Activated CD4-positive, alpha-beta memory T cell treated with anti-CD3 and anti-CD28 coated beads for 36 hours (primary cell): ENCODE measurements at regions of chr2 and their contacts with region 1.

Region 1: GRCh38 chr2:30139131-30139870 is 7.5 kb upstream of the YPEL5 start:
- DNase-seq: peak; percentile 60
- H3K4me3 Mint-ChIP-seq: peak overlapping the region; percentile 43
- H3K27ac Mint-ChIP-seq: peak overlapping the region; percentile 77
- H3K4me1 Mint-ChIP-seq: peaks cover 20% of the 10 kb centered on the region
- H3K27me3 Mint-ChIP-seq: no peaks in the 10 kb centered on the region

Region 2: GRCh38 chr2:30072250-30072842 is 67.0 kb before region 1 on chr2:
- CTCF ChIA-PET with region 1: no interaction called
- POLR2A ChIA-PET with region 1: no interaction called
- intact Hi-C with region 1: no loop called
- DNase-seq: peak; percentile 76
- H3K4me3 Mint-ChIP-seq: no peak overlapping the region
- H3K27ac Mint-ChIP-seq: no peak overlapping the region
- H3K4me1 Mint-ChIP-seq: no peaks in the 10 kb centered on the region
- H3K27me3 Mint-ChIP-seq: peaks cover 25% of the 10 kb centered on the region

Region 3: GRCh38 chr2:30127016-30127893 is 12.0 kb before region 1 on chr2:
- CTCF ChIA-PET with region 1: no interaction called
- POLR2A ChIA-PET with region 1: no interaction called
- intact Hi-C with region 1: no loop called
- DNase-seq: no peak
- H3K4me3 Mint-ChIP-seq: no peak overlapping the region
- H3K27ac Mint-ChIP-seq: no peak overlapping the region
- H3K4me1 Mint-ChIP-seq: no peaks in the 10 kb centered on the region
- H3K27me3 Mint-ChIP-seq: peaks cover 2% of the 10 kb centered on the region

Region 4: GRCh38 chr2:30155889-30156658 is 16.8 kb after region 1 on chr2:
- CTCF ChIA-PET with region 1: interaction called, 4 read pairs
- POLR2A ChIA-PET with region 1: interaction called, 3 read pairs
- intact Hi-C with region 1: loop called (anchors 1 kb)
- DNase-seq: no peak
- H3K4me3 Mint-ChIP-seq: no peak overlapping the region
- H3K27ac Mint-ChIP-seq: peak overlapping the region; percentile 59
- H3K4me1 Mint-ChIP-seq: peaks cover 51% of the 10 kb centered on the region
- H3K27me3 Mint-ChIP-seq: no peaks in the 10 kb centered on the region